IMR-90 (cell line): ENCODE measurements at regions of chr16 and their contacts with region 1.

Region 1: DNA sequence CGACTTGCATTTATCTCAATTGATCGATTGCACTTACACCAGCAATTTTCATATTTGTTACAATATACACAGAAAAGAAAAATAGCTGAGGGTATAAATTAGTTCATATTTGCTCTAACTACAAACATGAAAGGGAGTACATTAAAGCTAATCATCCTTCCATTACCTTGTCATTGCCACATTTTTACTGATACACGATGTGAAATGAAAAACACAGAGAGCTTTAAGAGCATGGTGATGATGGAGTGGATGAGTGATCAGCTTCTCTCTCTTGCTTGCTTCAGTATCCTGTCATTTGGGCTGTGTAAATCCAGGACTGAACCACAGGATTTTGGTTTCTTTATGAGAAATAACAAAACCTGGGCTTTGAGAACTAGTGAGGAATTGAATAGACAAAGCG is 1207.5 kb upstream of the GOT2 start:
- DNase-seq: no peak
- ATAC-seq: no peak
- H3K4me3 ChIP-seq: no peak overlapping the region
- H3K27ac ChIP-seq: no peak overlapping the region
- H3K4me1 ChIP-seq: no peaks in the 10 kb centered on the region
- H3K27me3 ChIP-seq: no peaks in the 10 kb centered on the region
- CTCF ChIP-seq: no peak
- POLR2A ChIP-seq: no peak
- RAD21 ChIP-seq: no peak

Region 2: DNA sequence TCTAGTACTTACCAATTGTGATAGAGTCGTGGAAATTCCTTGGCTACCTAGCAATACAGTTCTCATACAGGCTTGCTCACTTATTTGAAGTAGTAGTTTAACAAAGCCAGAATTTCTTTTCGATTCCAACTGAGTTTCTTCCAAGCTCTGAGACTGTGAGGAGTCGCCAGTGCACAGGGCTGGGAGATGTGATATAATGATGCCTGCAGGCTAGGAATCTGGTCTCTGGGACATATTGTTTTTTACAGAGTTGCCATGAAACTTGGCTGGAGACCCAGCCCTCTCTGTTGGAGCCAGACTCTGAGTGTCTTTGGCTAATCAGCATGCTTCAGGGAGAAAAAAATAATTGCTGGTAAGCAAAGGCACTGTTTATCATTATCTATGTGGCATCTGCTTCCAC is 508.7 kb before region 1 on chr16:
- CTCF ChIA-PET with region 1: no interaction called
- POLR2A ChIA-PET with region 1: interaction called, 15 read pairs
- dilution Hi-C with region 1: no loop called
- in situ Hi-C with region 1: no loop called
- intact Hi-C with region 1: no loop called
- DNase-seq: no peak
- ATAC-seq: no peak
- H3K4me3 ChIP-seq: no peak overlapping the region
- H3K27ac ChIP-seq: no peak overlapping the region
- H3K4me1 ChIP-seq: no peaks in the 10 kb centered on the region
- H3K27me3 ChIP-seq: no peaks in the 10 kb centered on the region
- CTCF ChIP-seq: no peak
- POLR2A ChIP-seq: no peak
- RAD21 ChIP-seq: no peak

Region 3: DNA sequence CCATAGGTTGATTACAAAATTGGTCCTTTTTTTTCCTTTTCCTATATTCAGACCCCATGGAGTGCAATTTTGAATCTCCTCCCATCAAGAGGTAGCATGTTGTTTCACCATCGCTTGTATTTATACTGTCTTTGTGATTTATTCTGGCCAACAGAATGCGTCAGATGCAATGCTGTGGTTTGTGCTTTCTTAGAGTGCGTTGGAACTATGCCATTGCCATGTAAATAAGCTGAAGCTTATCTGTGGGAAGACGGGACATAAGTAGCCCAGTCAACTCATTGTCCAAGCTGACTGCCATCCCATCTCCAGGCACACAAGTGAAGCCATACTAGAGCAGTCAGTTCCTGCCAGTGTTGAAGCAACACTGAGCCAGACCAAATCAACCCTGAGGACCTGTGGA is 131.8 kb after region 1 on chr16:
- CTCF ChIA-PET with region 1: no interaction called
- POLR2A ChIA-PET with region 1: no interaction called
- dilution Hi-C with region 1: no loop called
- in situ Hi-C with region 1: no loop called
- intact Hi-C with region 1: no loop called
- DNase-seq: no peak
- ATAC-seq: no peak
- H3K4me3 ChIP-seq: no peak overlapping the region
- H3K27ac ChIP-seq: no peak overlapping the region
- H3K4me1 ChIP-seq: no peaks in the 10 kb centered on the region
- H3K27me3 ChIP-seq: no peaks in the 10 kb centered on the region
- CTCF ChIP-seq: no peak
- POLR2A ChIP-seq: no peak
- RAD21 ChIP-seq: no peak